Caco-2 (cell line): ENCODE measurements at regions of chr10 and their contacts with region 1.

Region 1: GRCh38 chr10:59470570-59470969 is 108.2 kb upstream of the FAM13C start:
- DNase-seq: no peak
- H3K4me3 ChIP-seq: no peak overlapping the region
- H3K4me3 Mint-ChIP-seq: no peak overlapping the region
- H3K27ac Mint-ChIP-seq: no peak overlapping the region
- H3K4me1 ChIP-seq: no peaks in the 10 kb centered on the region
- H3K4me1 Mint-ChIP-seq: no peaks in the 10 kb centered on the region
- H3K27me3 ChIP-seq: no peaks in the 10 kb centered on the region
- H3K27me3 Mint-ChIP-seq: peaks cover 27% of the 10 kb centered on the region
- CTCF ChIP-seq: no peak

Region 2: DNA sequence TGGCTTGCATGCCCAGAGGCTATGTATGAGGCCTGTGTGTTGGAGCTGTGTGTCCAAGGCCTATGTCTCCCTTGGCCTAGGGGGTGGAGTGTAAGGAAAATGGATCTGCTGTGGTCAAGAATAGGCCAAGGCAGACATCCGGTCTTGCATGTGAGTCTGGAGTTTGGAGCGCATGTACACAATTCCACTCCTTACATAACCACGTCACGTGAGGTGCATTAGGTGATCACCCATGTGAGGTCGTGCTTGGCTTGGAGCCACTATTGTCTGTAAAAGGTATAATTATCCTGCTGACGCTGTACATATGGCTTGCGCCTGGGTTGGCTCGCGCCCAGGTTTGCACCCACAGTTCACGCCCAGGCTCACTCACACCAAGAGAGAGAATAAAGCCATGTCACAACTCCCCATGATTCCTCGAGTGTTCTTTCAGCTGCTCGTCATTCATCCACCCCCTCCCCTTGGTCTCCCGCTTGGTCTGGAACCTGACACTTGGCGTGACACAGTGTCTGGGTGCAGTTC is 852.4 kb before region 1 on chr10:
- CTCF ChIA-PET with region 1: no interaction called
- POLR2A ChIA-PET with region 1: no interaction called
- intact Hi-C with region 1: no loop called
- DNase-seq: peak in 1 of 2 experiments; percentile 39
- H3K4me3 ChIP-seq: no peak overlapping the region
- H3K4me3 Mint-ChIP-seq: no peak overlapping the region
- H3K27ac Mint-ChIP-seq: peak overlapping the region; percentile 4
- H3K4me1 ChIP-seq: no peaks in the 10 kb centered on the region
- H3K4me1 Mint-ChIP-seq: peaks cover 18% of the 10 kb centered on the region
- H3K27me3 ChIP-seq: no peaks in the 10 kb centered on the region
- H3K27me3 Mint-ChIP-seq: no peaks in the 10 kb centered on the region
- CTCF ChIP-seq: no peak

Region 3: DNA sequence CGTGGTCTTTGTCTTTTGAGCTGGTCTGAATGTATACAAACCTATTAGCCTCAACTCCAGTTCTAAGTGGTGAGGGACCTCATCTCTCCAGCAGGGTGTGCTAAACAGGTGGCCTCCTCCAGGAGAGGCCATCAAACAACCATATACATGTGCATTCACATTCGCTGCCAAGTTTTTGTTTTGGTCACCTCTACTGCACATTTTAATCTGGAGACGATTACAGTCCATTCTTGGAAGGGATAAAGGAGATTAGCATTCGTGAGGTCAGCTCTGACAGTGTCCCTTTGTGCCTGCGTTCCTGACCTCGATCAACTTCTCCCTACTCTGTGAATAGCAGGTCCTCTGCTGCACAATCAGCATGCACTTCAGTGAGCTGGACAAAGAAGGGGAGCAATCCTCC is 1412.6 kb after region 1 on chr10:
- CTCF ChIA-PET with region 1: no interaction called
- POLR2A ChIA-PET with region 1: no interaction called
- intact Hi-C with region 1: loop called (anchors 10 kb)
- DNase-seq: peak; percentile 54 to 64
- H3K4me3 ChIP-seq: no peak overlapping the region
- H3K4me3 Mint-ChIP-seq: no peak overlapping the region
- H3K27ac Mint-ChIP-seq: no peak overlapping the region
- H3K4me1 ChIP-seq: no peaks in the 10 kb centered on the region
- H3K4me1 Mint-ChIP-seq: no peaks in the 10 kb centered on the region
- H3K27me3 ChIP-seq: no peaks in the 10 kb centered on the region
- H3K27me3 Mint-ChIP-seq: no peaks in the 10 kb centered on the region
- CTCF ChIP-seq: peak; percentile 72 to 88